Activated CD4-positive, alpha-beta memory T cell treated with anti-CD3 and anti-CD28 coated beads, Interleukin-2, amount 10 ng/mL, durations not matched to agents 7 days and 5 days (primary cell): ENCODE measurements at regions of chr2 and their contacts with region 1.

Region 1: DNA sequence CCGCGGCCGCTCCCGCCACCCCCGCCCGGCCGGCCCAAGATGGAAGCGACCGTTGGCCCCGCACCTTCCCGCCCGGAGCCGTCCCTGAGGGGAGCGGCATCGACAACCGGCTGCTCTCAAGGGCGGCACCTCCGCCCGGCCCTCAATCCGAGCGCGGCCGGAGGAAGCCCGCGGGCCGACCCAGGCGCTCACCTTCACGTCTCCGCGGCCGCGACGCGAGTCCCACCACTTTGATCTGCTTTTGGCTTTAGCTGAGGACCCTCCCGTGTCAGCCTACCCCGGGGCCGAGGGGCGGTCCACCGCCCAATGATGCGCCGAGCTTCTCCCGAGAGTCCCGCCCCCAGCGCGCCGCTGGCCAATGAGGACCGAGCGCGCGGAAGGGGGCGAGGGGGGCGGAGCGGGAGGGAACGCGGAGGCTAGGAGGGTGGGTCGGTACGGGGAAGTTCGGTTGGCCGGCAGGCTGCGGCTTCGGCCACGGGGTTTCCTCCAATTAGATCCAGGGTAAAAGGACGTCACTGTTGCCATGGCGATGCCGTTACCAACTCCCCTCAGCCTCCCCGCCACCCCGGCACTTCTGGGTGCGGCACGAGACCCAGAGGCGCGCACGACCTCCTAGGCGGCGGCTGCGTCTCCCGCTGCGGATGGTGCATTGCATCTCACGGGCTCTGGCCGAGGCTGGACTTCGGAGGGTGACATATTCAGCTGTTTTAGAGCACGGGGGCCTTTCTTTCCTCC is at the start of gene YWHAQ:
- DNase-seq: peak; percentile 98
- H3K4me3 Mint-ChIP-seq: peak within 1 kb of the TSS; percentile 93
- H3K27ac Mint-ChIP-seq: peak within 1 kb of the TSS; percentile 91
- H3K4me1 Mint-ChIP-seq: peaks cover 46% of the 10 kb centered on the region
- H3K27me3 Mint-ChIP-seq: peaks cover 2% of the 10 kb centered on the region
- total RNA-seq, gene YWHAQ: 335 to 351 TPM

Region 2: DNA sequence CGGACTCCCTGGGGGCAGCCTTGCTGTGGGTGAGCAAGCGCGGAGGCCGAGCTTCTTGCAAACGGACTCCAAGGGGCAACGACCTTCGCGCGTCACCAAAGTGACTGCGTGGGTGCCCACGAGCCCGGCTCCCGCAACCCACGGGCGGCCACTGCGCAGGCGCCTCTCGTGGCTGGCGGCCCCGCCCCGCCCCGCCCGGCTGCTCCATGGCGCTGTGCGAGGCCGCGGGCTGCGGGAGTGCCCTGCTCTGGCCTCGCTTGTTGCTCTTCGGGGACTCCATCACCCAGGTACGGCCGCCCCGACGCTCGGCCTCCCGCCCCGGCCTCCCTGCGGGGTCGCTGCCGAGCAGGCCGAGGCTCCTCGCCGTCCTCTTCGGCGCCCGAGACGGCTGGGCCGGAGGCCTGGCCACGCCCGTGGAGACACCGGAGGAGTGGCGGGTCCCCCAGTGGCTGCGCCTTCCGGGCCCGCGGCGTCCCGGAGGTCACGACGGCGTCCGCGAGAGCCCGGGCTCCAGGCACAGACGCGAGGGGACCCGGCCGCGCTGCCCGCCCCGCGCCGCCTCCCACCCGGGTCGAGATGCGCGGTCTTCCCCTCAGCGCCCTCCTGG is 156.5 kb before region 1 on chr2 and contains the start of gene IAH1:
- CTCF ChIA-PET with region 1: no interaction called
- POLR2A ChIA-PET with region 1: interaction called, 27 read pairs
- DNase-seq: peak; percentile 76
- H3K4me3 Mint-ChIP-seq: peak within 1 kb of the TSS; percentile 79
- H3K27ac Mint-ChIP-seq: peak within 1 kb of the TSS; percentile 80
- H3K4me1 Mint-ChIP-seq: peaks cover 52% of the 10 kb centered on the region
- H3K27me3 Mint-ChIP-seq: no peaks in the 10 kb centered on the region
- total RNA-seq, gene IAH1: 69.2 to 79.0 TPM

Region 3: GRCh38 chr2:9618410-9618809 is 12.5 kb before region 1 on chr2:
- CTCF ChIA-PET with region 1: interaction called, 6 read pairs
- POLR2A ChIA-PET with region 1: interaction called, 48 read pairs
- DNase-seq: peak; percentile 52
- H3K4me3 Mint-ChIP-seq: peak overlapping the region; percentile 50
- H3K27ac Mint-ChIP-seq: peak overlapping the region; percentile 81
- H3K4me1 Mint-ChIP-seq: peaks cover 89% of the 10 kb centered on the region
- H3K27me3 Mint-ChIP-seq: no peaks in the 10 kb centered on the region

Region 4: DNA sequence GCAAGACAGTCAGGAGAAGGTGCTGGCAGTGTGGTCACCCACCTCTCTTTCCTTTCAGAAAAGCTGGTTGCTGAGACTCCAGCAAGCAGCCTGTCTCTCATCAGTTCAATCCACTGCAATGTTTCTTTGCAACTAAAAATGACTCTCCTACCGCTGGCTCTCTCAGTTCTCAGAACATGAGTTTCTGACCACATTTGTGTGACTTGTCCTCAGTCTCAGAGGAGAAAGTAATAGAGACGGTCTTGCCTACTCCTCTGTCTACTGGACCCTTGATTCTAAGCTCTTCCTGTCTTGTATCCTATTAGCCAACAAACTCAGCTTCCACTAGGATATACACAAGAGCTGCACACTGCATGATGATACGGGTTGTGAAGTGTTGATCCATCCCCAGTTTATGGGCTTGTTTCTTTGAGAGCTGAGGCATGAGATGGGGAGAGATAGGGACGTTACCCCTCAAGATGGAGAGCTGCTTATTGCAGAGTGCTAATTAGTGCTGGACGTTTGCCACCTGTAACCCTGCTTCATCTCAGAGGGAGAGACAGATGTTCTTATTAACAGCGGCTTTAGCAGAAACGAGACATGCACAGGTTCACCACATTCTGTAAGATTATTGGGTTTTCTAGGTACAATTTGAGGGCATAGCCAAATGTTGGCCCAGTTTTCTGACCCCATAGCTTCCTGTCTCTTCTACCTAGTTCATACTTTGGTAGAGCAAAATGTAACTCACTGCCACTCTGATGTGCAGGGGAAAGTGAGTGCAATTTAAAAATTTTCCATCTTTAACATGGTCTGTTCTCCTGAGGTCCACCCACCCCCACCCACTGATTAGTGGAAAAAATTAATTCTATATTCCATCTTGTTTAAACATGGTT is 32.3 kb after region 1 on chr2:
- CTCF ChIA-PET with region 1: interaction called, 4 read pairs
- POLR2A ChIA-PET with region 1: interaction called, 110 read pairs
- DNase-seq: no peak
- H3K4me3 Mint-ChIP-seq: no peak overlapping the region
- H3K27ac Mint-ChIP-seq: peak overlapping the region; percentile 74
- H3K4me1 Mint-ChIP-seq: peaks cover 32% of the 10 kb centered on the region
- H3K27me3 Mint-ChIP-seq: peaks cover 3% of the 10 kb centered on the region

Region 5: DNA sequence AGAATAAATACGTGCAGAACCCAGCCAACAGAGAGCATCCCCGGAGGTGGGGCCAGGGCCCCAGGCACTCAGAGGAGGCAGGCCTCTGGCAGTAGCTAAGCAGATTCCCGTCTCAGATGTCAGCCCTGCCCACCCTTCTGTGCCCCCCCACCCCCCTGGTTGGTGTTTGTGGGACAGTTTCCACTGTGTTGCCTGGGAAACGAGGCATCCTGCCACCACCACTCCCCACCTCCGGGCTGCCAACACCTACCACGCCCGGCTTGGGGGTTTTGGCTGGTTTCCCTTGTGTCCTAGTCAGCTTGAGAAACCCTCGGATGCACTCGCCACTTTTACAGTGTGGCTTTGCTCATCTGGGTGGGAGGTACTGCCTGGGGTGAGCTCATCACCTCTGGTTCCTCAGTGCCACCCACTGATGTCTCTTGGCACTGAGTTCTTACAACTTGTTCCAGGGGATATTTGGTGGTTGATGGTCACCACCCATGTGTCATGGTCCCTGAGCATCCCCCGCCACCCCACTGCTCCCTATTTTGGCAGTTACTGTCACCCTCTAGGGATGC is 72.2 kb after region 1 on chr2:
- CTCF ChIA-PET with region 1: interaction called, 14 read pairs
- POLR2A ChIA-PET with region 1: interaction called, 99 read pairs
- DNase-seq: peak; percentile 96
- H3K4me3 Mint-ChIP-seq: peak overlapping the region; percentile 9
- H3K27ac Mint-ChIP-seq: peak overlapping the region; percentile 92
- H3K4me1 Mint-ChIP-seq: peaks cover 79% of the 10 kb centered on the region
- H3K27me3 Mint-ChIP-seq: no peaks in the 10 kb centered on the region

Region 6: DNA sequence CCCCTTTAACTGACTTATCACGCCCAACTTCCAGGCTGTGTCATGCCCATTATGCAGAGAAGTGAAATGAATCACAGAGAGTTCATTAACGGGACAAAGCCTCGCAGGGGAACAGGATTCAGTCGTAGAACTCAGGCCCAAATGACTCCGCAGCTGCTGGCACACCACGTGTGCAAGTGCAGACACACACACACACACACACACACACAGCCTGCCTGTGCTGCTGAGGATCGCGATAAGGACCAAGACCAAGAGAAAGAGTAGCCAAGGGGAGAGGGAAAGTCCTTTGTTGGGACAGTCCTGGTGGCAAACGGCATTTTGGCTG is 122.3 kb after region 1 on chr2:
- CTCF ChIA-PET with region 1: interaction called, 6 read pairs
- POLR2A ChIA-PET with region 1: interaction called, 76 read pairs
- DNase-seq: peak; percentile 80
- H3K4me3 Mint-ChIP-seq: peak overlapping the region; percentile 95
- H3K27ac Mint-ChIP-seq: peak overlapping the region; percentile 100
- H3K4me1 Mint-ChIP-seq: peaks cover 76% of the 10 kb centered on the region
- H3K27me3 Mint-ChIP-seq: peaks cover 8% of the 10 kb centered on the region

Region 7: GRCh38 chr2:9799665-9800632 is 169.0 kb after region 1 on chr2:
- CTCF ChIA-PET with region 1: interaction called, 11 read pairs
- POLR2A ChIA-PET with region 1: interaction called, 20 read pairs
- DNase-seq: peak; percentile 92
- H3K4me3 Mint-ChIP-seq: peak overlapping the region; percentile 72
- H3K27ac Mint-ChIP-seq: peak overlapping the region; percentile 98
- H3K4me1 Mint-ChIP-seq: peaks cover 49% of the 10 kb centered on the region
- H3K27me3 Mint-ChIP-seq: no peaks in the 10 kb centered on the region

Region 8: GRCh38 chr2:9820020-9820419 is 189.1 kb after region 1 on chr2:
- CTCF ChIA-PET with region 1: no interaction called
- POLR2A ChIA-PET with region 1: no interaction called
- DNase-seq: no peak
- H3K4me3 Mint-ChIP-seq: no peak overlapping the region
- H3K27ac Mint-ChIP-seq: no peak overlapping the region
- H3K4me1 Mint-ChIP-seq: peaks cover 18% of the 10 kb centered on the region
- H3K27me3 Mint-ChIP-seq: peaks cover 6% of the 10 kb centered on the region